Posterior cingulate gyrus (tissue), 11 donors: ENCODE measurements at regions of chr20 and their contacts with region 1.

Region 1: GRCh38 chr20:4949833-4950178 is 51.5 kb downstream of the SLC23A2 start:
- DNase-seq: peak in 4 of 10 donors; percentile 21 to 45 (median 30)

Region 2: GRCh38 chr20:4869290-4870193 is 80.3 kb before region 1 on chr20:
- intact Hi-C with region 1: no loop called
- DNase-seq: no peak

Region 3: DNA sequence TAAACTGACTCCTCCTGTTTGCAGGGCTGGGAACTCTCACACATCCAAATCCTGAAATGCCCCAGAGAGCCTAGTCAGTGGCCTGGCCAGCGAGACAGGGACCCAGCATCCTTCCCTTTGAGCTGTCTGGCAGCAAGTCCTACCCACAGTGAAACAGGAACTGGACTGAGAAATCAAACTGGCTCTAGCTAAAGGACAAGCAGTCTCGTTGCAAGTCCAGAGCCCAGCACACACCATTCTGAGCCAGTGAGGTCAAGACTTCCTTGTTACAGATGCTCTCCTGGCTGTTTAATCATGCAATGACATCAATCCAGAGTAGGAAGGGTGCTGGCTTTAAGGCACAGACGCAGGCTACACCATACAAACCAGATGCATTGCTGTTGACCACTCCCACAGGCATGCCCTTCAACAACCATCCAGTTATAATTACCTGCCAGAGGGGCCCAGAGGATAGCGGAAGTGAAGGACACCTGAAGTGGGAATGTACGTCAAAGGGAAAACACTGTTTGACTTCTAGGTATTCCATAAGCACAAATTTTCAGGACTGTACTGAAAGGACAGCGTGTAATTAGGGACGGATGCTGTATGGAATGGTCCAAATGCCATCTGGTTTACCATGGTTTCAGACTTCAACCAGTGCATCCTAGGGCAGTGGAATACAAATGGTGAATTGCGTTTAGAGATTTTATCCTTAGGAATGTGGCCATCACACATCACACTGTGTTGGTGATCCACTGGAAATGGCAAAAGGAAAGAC is 62.9 kb before region 1 on chr20:
- intact Hi-C with region 1: loop called (anchors 5 kb)
- DNase-seq: peak in 2 of 10 donors; percentile 31 to 83